PC-9 (cell line): ENCODE measurements at regions of chr1 and their contacts with region 1.

Region 1: GRCh38 chr1:39110325-39110851 is 84.2 kb downstream of the NDUFS5 start:
- DNase-seq: no peak
- H3K4me3 ChIP-seq: peak overlapping the region; percentile 3; the same call in 1 of the 2 replicates
- H3K27ac ChIP-seq: peak overlapping the region; percentile 75
- H3K4me1 ChIP-seq: peaks cover 56% of the 10 kb centered on the region
- H3K27me3 ChIP-seq: no peaks in the 10 kb centered on the region
- CTCF ChIP-seq: no peak

Region 2: DNA sequence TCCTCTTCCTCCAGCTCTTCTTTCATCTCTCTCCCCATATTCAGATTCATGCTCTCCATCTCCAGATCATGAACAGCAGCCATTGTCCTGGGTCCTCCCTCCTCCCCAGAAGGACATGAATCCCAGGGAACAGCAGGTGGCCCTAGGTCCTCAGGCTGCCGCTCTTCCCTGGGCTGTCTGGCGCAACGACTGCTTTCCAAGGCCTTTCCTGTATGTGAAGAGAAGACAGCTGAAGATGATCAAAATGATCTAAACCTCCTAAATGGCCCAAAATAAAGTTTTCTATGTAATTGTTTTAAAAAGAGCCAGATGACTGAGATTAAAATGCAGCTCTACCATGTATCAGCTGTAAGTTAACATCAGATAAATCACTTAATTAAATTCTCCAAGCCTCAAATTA is 191.3 kb before region 1 on chr1:
- CTCF ChIA-PET with region 1: no interaction called
- POLR2A ChIA-PET with region 1: no interaction called
- intact Hi-C with region 1: no loop called
- DNase-seq: no peak
- H3K4me3 ChIP-seq: no peak overlapping the region
- H3K27ac ChIP-seq: no peak overlapping the region
- H3K4me1 ChIP-seq: no peaks in the 10 kb centered on the region
- H3K27me3 ChIP-seq: no peaks in the 10 kb centered on the region
- CTCF ChIP-seq: no peak

Region 3: GRCh38 chr1:39625462-39626273 is 515.3 kb after region 1 on chr1:
- CTCF ChIA-PET with region 1: interaction called, 19 read pairs
- POLR2A ChIA-PET with region 1: no interaction called
- intact Hi-C with region 1: no loop called
- DNase-seq: no peak
- H3K4me3 ChIP-seq: no peak overlapping the region
- H3K27ac ChIP-seq: no peak overlapping the region
- H3K4me1 ChIP-seq: no peaks in the 10 kb centered on the region
- H3K27me3 ChIP-seq: peaks cover 57% of the 10 kb centered on the region
- CTCF ChIP-seq: no peak